Pancreas (tissue), 10 donors: ENCODE measurements at regions of chr7 and their contacts with region 1.

Region 1: GRCh38 chr7:70829221-70830059 is 302.5 kb upstream of the GALNT17 start:
- DNase-seq: peak; percentile 9 to 83 (median 52)
- ATAC-seq: peak in 3 of 4 donors; percentile 81 to 91 (median 87)
- H3K4me3 ChIP-seq: no peak overlapping the region
- H3K27ac ChIP-seq: no peak overlapping the region
- H3K4me1 ChIP-seq: no peaks in the 10 kb centered on the region
- H3K27me3 ChIP-seq: peaks cover 0 to 5% (median 0%) of the 10 kb centered on the region in 4 donors
- CTCF ChIP-seq: peak; percentile 79 to 96 (median 91)

Region 2: DNA sequence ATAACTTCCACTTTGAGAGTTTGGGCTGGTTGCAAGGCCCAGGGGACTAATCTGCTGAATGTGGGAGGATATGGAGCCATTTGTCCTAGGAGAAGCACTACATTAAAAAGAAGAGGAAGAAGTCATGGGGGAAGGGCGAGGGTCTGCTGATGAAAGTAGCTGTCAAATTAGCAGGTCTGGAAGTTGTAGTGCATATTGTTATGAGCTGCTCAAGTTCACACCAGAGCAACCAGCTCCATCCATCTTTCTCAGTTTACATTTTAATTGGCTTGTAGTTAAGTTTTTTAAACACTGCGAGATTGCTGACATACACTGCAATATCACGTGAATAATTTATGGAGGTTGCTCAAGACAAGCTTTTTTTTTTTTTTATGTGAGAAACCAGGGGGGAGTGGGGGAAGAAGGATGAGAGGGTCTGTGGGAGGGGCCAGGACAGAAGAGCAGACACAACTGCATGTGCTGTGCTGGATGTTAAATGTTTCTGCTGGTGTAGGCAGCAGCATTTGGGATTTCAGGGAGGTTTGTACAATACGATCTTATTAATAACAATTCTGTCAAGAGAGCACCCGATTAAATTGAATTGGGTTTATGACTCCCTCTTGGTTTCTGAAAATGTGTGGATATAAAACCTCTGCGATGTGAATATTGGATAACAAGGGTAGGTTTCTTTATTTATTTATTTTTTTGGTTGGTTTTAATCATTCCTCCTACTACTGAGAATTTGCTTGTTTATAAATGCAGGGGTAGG is 456.5 kb before region 1 on chr7:
- intact Hi-C with region 1: no loop called
- DNase-seq: no peak
- ATAC-seq: no peak
- H3K4me3 ChIP-seq: no peak overlapping the region
- H3K27ac ChIP-seq: no peak overlapping the region
- H3K4me1 ChIP-seq: no peaks in the 10 kb centered on the region
- H3K27me3 ChIP-seq: no peaks in the 10 kb centered on the region
- CTCF ChIP-seq: no peak

Region 3: DNA sequence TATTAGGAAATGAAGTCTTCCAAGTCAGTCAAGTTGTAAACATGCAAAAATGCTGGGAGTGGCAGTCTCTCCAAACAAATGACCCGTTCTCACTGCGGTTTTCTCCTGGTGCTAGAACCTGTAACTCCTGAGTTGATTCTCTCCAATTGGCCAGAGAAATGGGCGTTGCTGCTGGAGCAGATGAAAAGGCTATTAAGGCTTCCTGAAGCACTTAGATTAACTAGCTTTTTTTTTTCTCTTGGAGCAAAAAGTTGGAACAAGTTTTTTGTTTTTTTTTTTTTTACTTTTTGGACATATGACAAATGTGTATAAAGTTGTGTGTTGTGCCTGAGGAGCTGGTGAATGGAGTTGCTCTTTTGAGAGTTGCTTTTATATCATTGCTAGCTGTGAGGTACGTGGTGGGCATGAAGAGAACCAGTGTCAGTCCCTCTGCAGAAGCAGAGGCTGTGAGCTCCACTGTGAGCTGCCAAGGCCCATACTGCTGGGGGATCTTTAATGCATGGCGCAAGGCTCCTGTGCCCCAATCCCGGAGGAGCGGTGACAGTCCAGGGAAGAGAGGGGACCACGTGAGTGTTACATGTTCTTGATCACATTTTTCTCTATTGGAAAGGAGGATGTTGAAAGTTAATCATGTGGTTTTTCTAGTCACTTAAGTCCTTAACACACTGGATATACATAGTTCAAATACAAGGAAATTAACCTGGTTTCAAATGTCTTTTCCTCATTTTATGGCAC is 91.1 kb before region 1 on chr7:
- intact Hi-C with region 1: no loop called
- DNase-seq: peak in 1 of 6 donors; percentile 22
- ATAC-seq: peak in 3 of 4 donors; percentile 51 to 77 (median 59)
- H3K4me3 ChIP-seq: no peak overlapping the region
- H3K27ac ChIP-seq: no peak overlapping the region
- H3K4me1 ChIP-seq: peaks cover 0 to 2% (median 0%) of the 10 kb centered on the region in 3 donors
- H3K27me3 ChIP-seq: no peaks in the 10 kb centered on the region
- CTCF ChIP-seq: no peak

Region 4: DNA sequence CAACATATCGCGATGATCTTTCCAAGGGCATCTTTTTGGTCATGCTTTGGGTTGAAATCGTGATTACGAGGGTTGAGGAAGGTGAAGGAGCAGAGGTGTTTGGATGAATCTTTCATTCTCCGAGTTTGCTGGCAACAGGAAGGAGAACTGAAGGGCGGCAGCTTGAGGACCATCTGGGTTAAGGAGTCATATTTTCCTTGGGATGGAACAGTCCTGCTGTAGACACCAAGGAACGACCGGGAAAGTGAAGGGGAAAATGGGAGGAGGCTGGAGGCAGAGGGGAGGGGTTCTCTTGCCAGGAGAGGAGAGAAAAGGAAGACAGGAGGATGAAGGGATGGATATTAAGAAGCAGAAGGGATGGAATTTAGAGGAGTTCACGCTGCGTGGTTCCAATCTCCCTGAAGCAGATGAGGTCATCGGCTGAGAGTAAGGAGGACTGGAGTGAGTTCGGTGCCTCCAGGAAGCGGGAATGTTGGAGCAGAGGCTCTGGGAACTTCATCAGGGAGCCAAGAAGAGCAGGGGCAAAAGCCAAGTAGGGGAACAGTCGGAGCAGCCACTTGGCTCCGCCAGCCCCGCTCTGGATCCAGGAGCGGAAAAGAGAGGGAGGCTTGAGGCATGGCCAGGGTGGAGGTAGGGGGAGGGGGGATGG is 185.9 kb after region 1 on chr7:
- intact Hi-C with region 1: no loop called
- DNase-seq: peak in 1 of 6 donors; percentile 2
- ATAC-seq: peak in 1 of 4 donors; percentile 55
- H3K4me3 ChIP-seq: no peak overlapping the region
- H3K27ac ChIP-seq: no peak overlapping the region
- H3K4me1 ChIP-seq: no peaks in the 10 kb centered on the region
- H3K27me3 ChIP-seq: no peaks in the 10 kb centered on the region
- CTCF ChIP-seq: no peak

Region 5: GRCh38 chr7:71746006-71746405 is 916.6 kb after region 1 on chr7:
- intact Hi-C with region 1: loop called in 1 of 3 experiments (anchors 10 kb)
- DNase-seq: no peak
- ATAC-seq: no peak
- H3K4me3 ChIP-seq: no peak overlapping the region
- H3K27ac ChIP-seq: no peak overlapping the region
- H3K4me1 ChIP-seq: no peaks in the 10 kb centered on the region
- H3K27me3 ChIP-seq: no peaks in the 10 kb centered on the region
- CTCF ChIP-seq: no peak